PC-9 (cell line): ENCODE measurements at regions of chr5 and their contacts with region 1.

Region 1: DNA sequence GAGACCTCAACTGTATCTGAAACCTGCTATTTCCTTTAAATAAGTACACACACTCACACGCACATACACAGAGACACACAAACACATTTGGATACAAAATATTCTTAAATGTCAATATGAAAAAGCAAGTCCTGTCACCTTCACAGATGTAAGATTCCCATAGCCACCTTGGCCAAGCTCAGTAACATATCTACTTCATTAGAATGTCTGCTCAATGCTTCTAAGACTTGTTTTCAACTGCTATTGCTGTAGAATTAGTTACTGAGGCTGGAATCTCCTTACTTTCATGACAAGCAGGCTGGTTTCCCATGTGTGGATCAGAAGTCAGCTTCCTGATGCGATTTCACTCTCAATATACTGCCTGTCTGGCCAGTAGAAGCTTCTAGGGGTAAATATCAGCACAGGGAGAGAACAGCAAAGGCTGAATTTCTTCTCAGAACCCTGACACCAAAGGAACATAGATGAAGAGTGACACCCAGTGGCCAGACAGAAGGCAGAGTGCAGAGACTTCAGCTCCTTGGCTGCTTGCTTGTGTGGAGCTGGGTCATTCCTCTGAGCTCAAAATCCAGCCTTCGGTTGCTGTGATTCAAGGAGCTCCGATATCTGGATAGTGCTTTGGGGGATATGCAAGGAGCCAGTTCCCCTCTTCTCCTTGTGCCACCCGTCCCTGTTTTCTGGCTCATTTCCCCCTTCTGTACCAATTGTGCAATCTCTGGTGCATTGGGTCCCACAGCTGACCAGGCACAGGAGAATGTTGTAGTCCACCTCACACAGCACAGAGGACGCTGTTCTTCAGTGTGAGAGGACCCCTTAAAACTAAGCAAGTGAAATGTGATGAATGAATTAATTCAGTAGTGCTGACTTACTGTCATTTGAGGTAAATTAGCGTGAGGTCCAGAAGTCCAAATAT is 26.6 kb upstream of the ABLIM3 start:
- DNase-seq: peak; percentile 74 to 82
- H3K4me3 ChIP-seq: peak overlapping the region; percentile 22; the same call in 1 of the 2 replicates
- H3K27ac ChIP-seq: peak overlapping the region; percentile 92
- H3K4me1 ChIP-seq: peaks cover 66% of the 10 kb centered on the region
- H3K27me3 ChIP-seq: no peaks in the 10 kb centered on the region
- CTCF ChIP-seq: peak; percentile 90

Region 2: GRCh38 chr5:148443998-148444397 is 670.7 kb before region 1 on chr5:
- CTCF ChIA-PET with region 1: interaction called, 5 read pairs
- POLR2A ChIA-PET with region 1: no interaction called
- intact Hi-C with region 1: loop called (anchors 1 kb)
- DNase-seq: peak; percentile 39 to 65
- H3K4me3 ChIP-seq: no peak overlapping the region
- H3K27ac ChIP-seq: no peak overlapping the region
- H3K4me1 ChIP-seq: no peaks in the 10 kb centered on the region
- H3K27me3 ChIP-seq: no peaks in the 10 kb centered on the region
- CTCF ChIP-seq: peak; percentile 89

Region 3: GRCh38 chr5:148826053-148826738 is 288.5 kb before region 1 on chr5 and contains the start of gene ADRB2:
- CTCF ChIA-PET with region 1: no interaction called
- POLR2A ChIA-PET with region 1: no interaction called
- intact Hi-C with region 1: loop called (anchors 5 kb)
- DNase-seq: peak; percentile 90 to 98
- H3K4me3 ChIP-seq: peak within 1 kb of the TSS; percentile 63
- H3K27ac ChIP-seq: peak within 1 kb of the TSS; percentile 68
- H3K4me1 ChIP-seq: peaks cover 24% of the 10 kb centered on the region
- H3K27me3 ChIP-seq: no peaks in the 10 kb centered on the region
- CTCF ChIP-seq: no peak
- total RNA-seq, gene ADRB2: 2.8 and 3.1 TPM in 2 replicates

Region 4: GRCh38 chr5:149049371-149049781 is 65.3 kb before region 1 on chr5:
- CTCF ChIA-PET with region 1: no interaction called
- POLR2A ChIA-PET with region 1: no interaction called
- intact Hi-C with region 1: no loop called
- DNase-seq: no peak
- H3K4me3 ChIP-seq: no peak overlapping the region
- H3K27ac ChIP-seq: no peak overlapping the region
- H3K4me1 ChIP-seq: 0 out of 2 replicates have a peak, but pooled peaks cover 6% of the 10 kb centered on the region
- H3K27me3 ChIP-seq: no peaks in the 10 kb centered on the region
- CTCF ChIP-seq: no peak

Region 5: DNA sequence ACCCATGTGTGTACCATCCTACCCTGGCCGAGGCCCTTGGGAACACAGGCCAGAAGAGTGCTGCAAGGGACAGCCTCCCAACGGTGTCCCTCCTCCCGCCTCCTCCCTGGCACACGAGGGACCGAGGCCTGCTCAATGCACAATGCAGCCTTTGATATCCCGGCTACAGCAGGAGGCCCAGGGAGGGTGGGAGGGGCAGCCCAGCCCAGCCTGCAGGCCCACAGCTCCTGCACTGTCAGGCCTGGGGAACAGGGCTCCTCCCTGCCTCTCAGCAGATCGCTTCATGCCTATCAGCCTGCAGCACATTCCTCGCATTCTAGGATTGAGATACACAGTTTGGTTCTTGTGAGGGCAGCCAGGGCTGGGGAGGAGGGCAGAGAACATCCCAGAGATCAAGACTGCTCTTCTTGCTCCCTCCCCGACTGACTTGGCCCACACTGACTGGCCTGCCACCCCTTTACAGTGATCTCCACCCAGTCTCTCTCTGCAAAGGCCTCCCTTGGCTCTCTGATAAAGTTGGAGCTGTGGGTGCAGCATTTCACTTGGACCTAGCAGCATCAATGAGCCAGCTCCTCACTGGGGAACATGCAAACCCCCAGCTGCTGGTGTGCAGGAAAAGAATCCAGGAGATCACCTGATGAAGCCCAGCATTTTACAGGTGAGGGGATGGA is 51.5 kb before region 1 on chr5 and contains the start of gene SH3TC2:
- CTCF ChIA-PET with region 1: interaction called, 3 read pairs
- POLR2A ChIA-PET with region 1: interaction called, 4 read pairs
- intact Hi-C with region 1: loop called (anchors 1 kb)
- DNase-seq: peak; percentile 81 to 90
- H3K4me3 ChIP-seq: peak within 1 kb of the TSS; percentile 46; the same call in 1 of the 2 replicates
- H3K27ac ChIP-seq: peak within 1 kb of the TSS; percentile 99
- H3K4me1 ChIP-seq: peaks cover 68% of the 10 kb centered on the region
- H3K27me3 ChIP-seq: no peaks in the 10 kb centered on the region
- CTCF ChIP-seq: no peak
- total RNA-seq, gene SH3TC2: 32.1 and 38.8 TPM in 2 replicates

Region 6: DNA sequence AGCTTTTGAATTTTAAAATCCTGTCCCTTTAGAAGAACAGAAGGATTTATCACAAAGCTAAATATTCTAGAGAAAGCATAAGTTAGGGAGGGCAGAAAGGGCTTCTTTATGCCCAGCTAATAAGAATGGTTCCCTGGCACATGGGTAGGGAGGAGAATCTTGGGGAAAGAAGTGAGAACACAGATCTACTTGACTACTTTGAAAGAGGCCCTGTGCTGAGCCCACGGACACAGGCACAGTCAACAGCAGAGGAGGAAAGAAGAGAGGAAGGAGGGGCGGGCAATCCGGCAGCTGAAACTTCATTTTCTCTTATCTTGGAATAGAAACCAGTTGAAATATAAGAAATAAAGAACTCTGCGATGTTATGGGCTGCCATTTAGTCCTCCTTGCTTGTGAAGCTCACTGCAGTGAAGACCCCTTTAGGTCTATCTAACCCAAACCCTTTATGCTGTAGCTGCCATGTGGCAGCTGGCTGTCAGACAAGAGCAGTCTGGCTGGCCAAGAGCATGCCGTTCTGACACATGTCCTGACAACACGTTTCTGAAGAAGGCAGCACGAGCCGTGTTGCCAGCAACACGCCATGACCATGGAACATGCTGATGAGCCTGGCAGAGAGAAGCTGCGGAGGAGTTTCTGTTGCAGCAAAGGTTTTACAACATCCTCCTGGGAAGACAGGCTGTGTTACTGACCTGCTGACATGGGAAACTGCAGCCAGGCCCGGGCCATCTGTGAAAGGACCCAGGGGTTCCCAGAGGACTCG is 60.9 kb after region 1 on chr5:
- CTCF ChIA-PET with region 1: no interaction called
- POLR2A ChIA-PET with region 1: no interaction called
- intact Hi-C with region 1: no loop called
- DNase-seq: no peak
- H3K4me3 ChIP-seq: no peak overlapping the region
- H3K27ac ChIP-seq: no peak overlapping the region
- H3K4me1 ChIP-seq: peaks cover 17% of the 10 kb centered on the region
- H3K27me3 ChIP-seq: no peaks in the 10 kb centered on the region
- CTCF ChIP-seq: no peak

Region 7: DNA sequence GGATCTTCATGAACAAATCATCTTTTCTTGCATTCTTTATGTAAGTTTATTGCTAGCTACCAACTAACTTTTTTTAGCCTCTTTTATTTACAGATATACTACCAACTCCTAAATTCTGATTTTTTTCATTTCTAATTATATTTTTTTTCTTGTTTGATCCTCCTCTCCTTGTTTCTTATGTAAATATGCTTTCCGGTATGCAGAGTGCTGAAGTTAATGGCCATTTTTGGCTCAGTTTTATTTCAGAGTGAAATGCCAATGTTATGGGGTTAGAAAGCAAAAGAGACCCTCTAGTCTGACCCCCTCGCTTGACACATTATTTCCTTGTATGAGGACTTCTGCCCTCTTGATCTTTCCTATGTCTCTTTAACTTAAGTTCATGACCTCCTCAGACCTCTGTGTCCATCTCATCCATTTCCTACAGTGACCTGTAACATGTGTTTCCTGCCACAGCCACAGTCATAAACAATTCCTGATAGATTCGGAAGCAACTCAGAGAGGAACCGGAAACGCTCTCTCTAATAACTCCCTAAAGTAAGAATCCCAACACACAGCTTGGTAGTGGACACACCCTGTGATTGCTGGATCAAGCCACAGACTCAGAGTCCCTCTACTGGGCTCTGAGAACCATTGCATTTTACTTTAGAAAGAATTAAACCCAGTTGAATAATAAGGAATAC is 114.1 kb after region 1 on chr5:
- CTCF ChIA-PET with region 1: interaction called, 13 read pairs
- POLR2A ChIA-PET with region 1: no interaction called
- intact Hi-C with region 1: loop called (anchors 1 kb)
- DNase-seq: peak; percentile 40 to 53
- H3K4me3 ChIP-seq: no peak overlapping the region
- H3K27ac ChIP-seq: no peak overlapping the region
- H3K4me1 ChIP-seq: peaks cover 18% of the 10 kb centered on the region
- H3K27me3 ChIP-seq: no peaks in the 10 kb centered on the region
- CTCF ChIP-seq: peak; percentile 68